ENCODE measurements at regions of chr2 and their contacts with region 1.

Region 1: DNA sequence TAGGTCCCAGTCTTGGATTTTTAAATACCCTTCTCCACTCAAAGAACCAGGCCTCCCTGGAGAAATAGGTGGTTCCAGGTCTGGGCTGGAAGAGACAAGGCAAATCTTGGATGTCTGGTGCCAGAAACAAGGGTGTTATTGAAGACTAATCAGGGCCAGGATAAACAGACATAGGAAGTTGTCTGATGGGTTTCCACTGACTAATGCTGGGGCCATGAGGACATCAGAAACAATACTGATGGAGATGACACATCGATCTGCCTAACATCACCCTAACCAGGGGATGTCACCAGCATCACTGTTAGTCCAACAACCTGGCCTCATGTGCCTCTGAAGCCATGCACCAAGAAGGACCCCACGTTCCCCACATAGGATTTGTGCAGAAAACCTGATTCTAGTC is 42.5 kb upstream of the GLI2 start:
- DNase-seq: no peak
- H3K4me3 ChIP-seq: no peak overlapping the region
- H3K27ac ChIP-seq: no peak overlapping the region
- H3K4me1 ChIP-seq: peaks cover 4 to 7% (median 6%) of the 10 kb centered on the region in 4 experiments; a peak in 6 of 7 replicates
- H3K27me3 ChIP-seq: peaks cover 0 to 21% (median 18%) of the 10 kb centered on the region in 4 experiments; a peak in 5 of 7 replicates
- CTCF ChIP-seq: no peak
- EP300 ChIP-seq: no peak
- POLR2A ChIP-seq: no peak
- RAD21 ChIP-seq: no peak

Region 2: GRCh38 chr2:120712180-120712681 is 19.1 kb after region 1 on chr2:
- CTCF ChIA-PET with region 1: interaction called, 41 read pairs
- POLR2A ChIA-PET with region 1: interaction called, 8 read pairs
- DNase-seq: no peak
- H3K4me3 ChIP-seq: no peak overlapping the region
- H3K27ac ChIP-seq: no peak overlapping the region
- H3K4me1 ChIP-seq: peaks cover 14 to 23% (median 17%) of the 10 kb centered on the region in 4 experiments
- H3K27me3 ChIP-seq: peaks cover 0 to 19% (median 8%) of the 10 kb centered on the region in 4 experiments; a peak in 5 of 7 replicates
- CTCF ChIP-seq: no peak
- EP300 ChIP-seq: no peak
- POLR2A ChIP-seq: no peak
- RAD21 ChIP-seq: no peak

Region 3: DNA sequence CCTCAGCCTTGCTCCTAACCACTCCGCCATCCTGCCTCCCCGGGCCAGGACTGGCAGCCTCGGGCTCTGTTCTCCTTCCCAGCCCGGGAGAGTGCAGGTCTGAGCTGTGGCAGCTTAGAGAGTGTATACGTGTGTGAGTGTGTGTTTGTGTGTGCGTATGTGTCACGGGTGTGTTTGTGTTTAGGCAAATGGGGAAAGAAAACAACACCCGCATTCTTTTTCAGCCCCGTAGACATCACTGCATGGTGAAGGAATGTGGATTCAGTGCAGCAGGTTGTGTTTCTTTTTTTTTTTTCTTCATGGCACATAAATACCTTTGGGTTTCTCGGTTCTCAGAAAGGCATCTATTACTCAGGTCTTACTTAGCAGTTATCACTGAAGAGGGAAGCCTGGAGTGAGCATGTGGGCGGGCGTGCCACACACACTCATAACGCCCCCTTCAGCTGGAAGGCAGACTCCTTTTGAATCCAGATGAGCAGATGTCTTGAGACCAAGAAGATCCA is 86.7 kb after region 1 on chr2:
- CTCF ChIA-PET with region 1: interaction called, 14 read pairs
- POLR2A ChIA-PET with region 1: no interaction called
- DNase-seq: no peak
- H3K4me3 ChIP-seq: no peak overlapping the region
- H3K27ac ChIP-seq: no peak overlapping the region
- H3K4me1 ChIP-seq: peaks cover 6 to 42% (median 27%) of the 10 kb centered on the region in 4 experiments
- H3K27me3 ChIP-seq: no peaks in the 10 kb centered on the region
- CTCF ChIP-seq: peak in 1 of 3 experiments; percentile 35; a peak in 1 of 4 replicates
- EP300 ChIP-seq: no peak
- POLR2A ChIP-seq: no peak
- RAD21 ChIP-seq: peak in 1 of 2 experiments; percentile 38; a peak in 1 of 4 replicates

Region 4: DNA sequence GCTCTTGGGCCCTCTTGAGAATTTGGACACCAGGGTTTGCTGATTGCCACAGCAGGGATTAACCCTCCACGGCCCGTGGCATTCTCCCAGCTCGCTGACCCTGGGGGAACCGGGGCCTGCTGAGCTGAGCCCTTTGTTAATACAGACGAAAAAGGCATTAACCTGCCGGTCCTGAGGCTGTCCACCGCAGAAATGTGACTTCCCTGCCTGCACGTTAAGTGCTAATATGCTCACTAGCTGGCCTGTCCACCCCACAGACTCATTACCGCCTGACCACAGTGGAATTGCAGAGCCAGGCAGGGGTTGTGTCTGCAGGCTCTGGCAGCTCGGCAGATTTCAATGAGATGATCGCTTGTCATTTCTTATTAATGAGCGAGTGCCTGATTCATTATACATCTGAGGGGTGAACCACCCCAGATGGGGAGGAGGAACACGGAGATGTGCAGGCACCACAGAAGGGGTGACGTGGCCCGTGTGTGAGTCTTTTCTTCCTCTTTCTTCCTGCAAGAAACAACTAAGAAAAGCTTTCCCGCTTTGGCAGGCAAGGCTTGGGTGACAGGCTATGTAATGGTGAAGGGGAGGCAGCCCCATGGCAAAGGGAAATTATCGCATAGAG is 168.6 kb after region 1 on chr2:
- CTCF ChIA-PET with region 1: interaction called, 13 read pairs
- POLR2A ChIA-PET with region 1: no interaction called
- DNase-seq: no peak
- H3K4me3 ChIP-seq: no peak overlapping the region
- H3K27ac ChIP-seq: no peak overlapping the region
- H3K4me1 ChIP-seq: peaks cover 5 to 42% (median 20%) of the 10 kb centered on the region in 4 experiments
- H3K27me3 ChIP-seq: no peaks in the 10 kb centered on the region
- CTCF ChIP-seq: no peak
- EP300 ChIP-seq: no peak
- POLR2A ChIP-seq: no peak
- RAD21 ChIP-seq: no peak

Region 5: DNA sequence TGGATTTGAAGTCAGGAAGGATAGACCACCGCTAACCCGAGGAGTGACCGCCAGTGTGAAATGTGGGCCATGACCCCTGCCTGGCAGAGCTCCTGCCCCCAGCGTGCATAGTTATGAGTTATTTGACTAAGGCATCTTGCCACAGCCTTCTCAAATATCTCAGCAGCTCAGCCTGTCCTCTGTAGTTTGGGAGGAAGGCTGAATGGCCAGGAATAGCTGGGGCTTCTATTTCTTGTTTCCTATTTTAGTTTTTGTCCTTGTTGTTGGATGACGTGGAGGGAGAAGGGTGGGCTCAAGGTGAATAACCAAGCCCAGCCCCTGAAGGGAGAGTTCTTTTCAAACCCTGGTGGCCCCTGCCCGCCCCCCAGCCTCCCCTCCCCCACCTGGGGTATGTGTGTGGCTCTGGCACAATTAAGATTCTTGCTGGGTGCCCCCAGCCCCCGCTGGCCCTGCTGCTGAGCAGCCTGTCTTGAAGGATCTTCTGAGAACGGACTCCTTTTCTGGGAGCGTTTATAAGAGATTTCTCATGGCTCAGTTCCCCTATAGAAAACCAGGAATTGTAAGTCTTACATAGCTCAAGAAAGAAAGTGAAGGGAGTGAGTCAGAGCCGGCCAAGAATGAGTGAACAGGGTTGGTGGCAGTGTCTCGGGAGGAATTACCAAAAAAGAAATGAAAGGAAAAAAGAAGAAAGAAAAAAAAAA is 200.0 kb after region 1 on chr2:
- CTCF ChIA-PET with region 1: interaction called, 12 read pairs
- POLR2A ChIA-PET with region 1: no interaction called
- DNase-seq: no peak
- H3K4me3 ChIP-seq: peak overlapping the region in 3 of 4 experiments; percentile 23 to 44 (median 27); a peak in 4 of 8 replicates
- H3K27ac ChIP-seq: no peak overlapping the region; the same call in 1 of the 2 replicates
- H3K4me1 ChIP-seq: peaks cover 6 to 23% (median 14%) of the 10 kb centered on the region in 4 experiments; a peak in 6 of 7 replicates
- H3K27me3 ChIP-seq: no peaks in the 10 kb centered on the region; a peak in 1 of 7 replicates
- CTCF ChIP-seq: no peak
- EP300 ChIP-seq: no peak
- POLR2A ChIP-seq: no peak
- RAD21 ChIP-seq: no peak

Region 6: GRCh38 chr2:120949027-120949956 is 256.2 kb after region 1 on chr2:
- CTCF ChIA-PET with region 1: interaction called, 21 read pairs
- POLR2A ChIA-PET with region 1: no interaction called
- DNase-seq: no peak
- H3K4me3 ChIP-seq: no peak overlapping the region
- H3K27ac ChIP-seq: no peak overlapping the region
- H3K4me1 ChIP-seq: no peaks in the 10 kb centered on the region; a peak in 1 of 7 replicates
- H3K27me3 ChIP-seq: no peaks in the 10 kb centered on the region
- CTCF ChIP-seq: peak in 1 of 3 experiments; percentile 45; a peak in 1 of 4 replicates
- EP300 ChIP-seq: no peak
- POLR2A ChIP-seq: no peak
- RAD21 ChIP-seq: peak; percentile 11 to 33; a peak in 2 of 4 replicates

Region 7: GRCh38 chr2:121058852-121059558 is 365.9 kb after region 1 on chr2:
- CTCF ChIA-PET with region 1: interaction called, 13 read pairs
- POLR2A ChIA-PET with region 1: no interaction called
- DNase-seq: no peak
- H3K4me3 ChIP-seq: no peak overlapping the region
- H3K27ac ChIP-seq: no peak overlapping the region
- H3K4me1 ChIP-seq: peaks cover 0 to 15% (median 4%) of the 10 kb centered on the region in 4 experiments; a peak in 6 of 7 replicates
- H3K27me3 ChIP-seq: peaks cover 0 to 17% (median 5%) of the 10 kb centered on the region in 4 experiments; a peak in 3 of 7 replicates
- CTCF ChIP-seq: no peak
- EP300 ChIP-seq: no peak
- POLR2A ChIP-seq: no peak
- RAD21 ChIP-seq: no peak